GM12878 (cell line): ENCODE measurements at regions of chr1 and their contacts with region 1.

Region 1: GRCh38 chr1:235783148-235783776 is 83.4 kb downstream of the LYST start:
- DNase-seq: no peak
- ATAC-seq: peak; percentile 57
- H3K4me3 ChIP-seq: no peak overlapping the region
- H3K27ac ChIP-seq: no peak overlapping the region
- H3K4me1 ChIP-seq: no peaks in the 10 kb centered on the region
- H3K27me3 ChIP-seq: no peaks in the 10 kb centered on the region
- CTCF ChIP-seq: peak; percentile 29 to 52 (median 32); a peak in 3 of 6 replicates
- EP300 ChIP-seq: no peak
- POLR2A ChIP-seq: no peak
- RAD21 ChIP-seq: peak; percentile 77

Region 2: GRCh38 chr1:235093696-235094592 is 689.3 kb before region 1 on chr1:
- CTCF ChIA-PET with region 1: interaction called, 4 read pairs
- POLR2A ChIA-PET with region 1: no interaction called
- RAD21 ChIA-PET with region 1: no interaction called
- SMC1A ChIA-PET with region 1: no interaction called
- in situ Hi-C with region 1: loop called (anchors 10 kb)
- intact Hi-C with region 1: no loop called
- DNase-seq: no peak
- ATAC-seq: peak; percentile 94
- H3K4me3 ChIP-seq: no peak overlapping the region
- H3K27ac ChIP-seq: no peak overlapping the region
- H3K4me1 ChIP-seq: no peaks in the 10 kb centered on the region; the same call in 1 of the 2 replicates
- H3K27me3 ChIP-seq: no peaks in the 10 kb centered on the region
- CTCF ChIP-seq: peak; percentile 91 to 97 (median 94)
- EP300 ChIP-seq: no peak
- POLR2A ChIP-seq: no peak
- RAD21 ChIP-seq: peak; percentile 81

Region 3: DNA sequence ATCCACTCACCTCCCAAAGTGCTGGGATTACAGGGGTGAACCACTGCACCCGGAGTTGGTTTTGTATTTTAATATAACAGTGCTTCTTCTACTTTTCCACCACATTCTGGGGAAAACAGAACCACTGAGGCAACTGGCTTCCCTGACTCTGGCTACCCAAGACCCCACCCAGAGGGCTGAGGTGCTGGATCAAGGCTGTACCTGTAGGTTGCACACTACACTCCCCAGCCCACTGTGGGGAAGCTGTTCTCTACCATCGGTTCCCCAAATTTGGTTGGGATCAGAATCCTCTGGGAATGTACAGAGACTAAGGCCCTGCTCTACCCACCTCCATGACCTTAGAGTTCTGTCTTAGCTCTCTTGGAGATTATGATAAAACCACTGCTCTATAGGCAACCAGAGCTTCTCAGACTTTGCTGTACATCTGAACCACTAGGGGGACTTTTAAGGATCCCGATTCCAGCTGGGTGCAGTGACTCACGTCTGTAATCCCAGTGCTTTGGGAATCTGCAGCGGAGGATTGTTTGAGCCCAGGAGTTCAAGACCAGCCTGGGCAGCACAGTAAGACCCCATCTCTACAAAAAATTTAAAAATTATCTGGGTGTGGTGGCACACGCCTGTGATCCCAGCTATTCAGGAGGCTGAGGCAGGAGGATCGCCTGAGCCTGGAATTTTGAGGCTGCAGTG is 185.3 kb before region 1 on chr1:
- CTCF ChIA-PET with region 1: interaction called, 26 read pairs
- POLR2A ChIA-PET with region 1: no interaction called
- RAD21 ChIA-PET with region 1: interaction called, 3 read pairs
- SMC1A ChIA-PET with region 1: interaction called, 5 read pairs
- in situ Hi-C with region 1: no loop called
- intact Hi-C with region 1: no loop called
- DNase-seq: no peak
- ATAC-seq: peak; percentile 42; the same call in 2 of the 3 replicates
- H3K4me3 ChIP-seq: no peak overlapping the region
- H3K27ac ChIP-seq: no peak overlapping the region
- H3K4me1 ChIP-seq: no peaks in the 10 kb centered on the region
- H3K27me3 ChIP-seq: no peaks in the 10 kb centered on the region
- CTCF ChIP-seq: peak; percentile 13 to 41 (median 35); a peak in 5 of 6 replicates
- EP300 ChIP-seq: no peak
- POLR2A ChIP-seq: no peak
- RAD21 ChIP-seq: no peak

Region 4: GRCh38 chr1:235758931-235759330 is 24.3 kb before region 1 on chr1:
- CTCF ChIA-PET with region 1: interaction called, 16 read pairs
- POLR2A ChIA-PET with region 1: no interaction called
- RAD21 ChIA-PET with region 1: interaction called, 4 read pairs
- SMC1A ChIA-PET with region 1: interaction called, 6 read pairs
- in situ Hi-C with region 1: no loop called
- intact Hi-C with region 1: no loop called
- DNase-seq: no peak
- ATAC-seq: no peak
- H3K4me3 ChIP-seq: no peak overlapping the region
- H3K27ac ChIP-seq: no peak overlapping the region
- H3K4me1 ChIP-seq: no peaks in the 10 kb centered on the region
- H3K27me3 ChIP-seq: no peaks in the 10 kb centered on the region
- CTCF ChIP-seq: no peak
- EP300 ChIP-seq: no peak
- POLR2A ChIP-seq: no peak
- RAD21 ChIP-seq: no peak

Region 5: DNA sequence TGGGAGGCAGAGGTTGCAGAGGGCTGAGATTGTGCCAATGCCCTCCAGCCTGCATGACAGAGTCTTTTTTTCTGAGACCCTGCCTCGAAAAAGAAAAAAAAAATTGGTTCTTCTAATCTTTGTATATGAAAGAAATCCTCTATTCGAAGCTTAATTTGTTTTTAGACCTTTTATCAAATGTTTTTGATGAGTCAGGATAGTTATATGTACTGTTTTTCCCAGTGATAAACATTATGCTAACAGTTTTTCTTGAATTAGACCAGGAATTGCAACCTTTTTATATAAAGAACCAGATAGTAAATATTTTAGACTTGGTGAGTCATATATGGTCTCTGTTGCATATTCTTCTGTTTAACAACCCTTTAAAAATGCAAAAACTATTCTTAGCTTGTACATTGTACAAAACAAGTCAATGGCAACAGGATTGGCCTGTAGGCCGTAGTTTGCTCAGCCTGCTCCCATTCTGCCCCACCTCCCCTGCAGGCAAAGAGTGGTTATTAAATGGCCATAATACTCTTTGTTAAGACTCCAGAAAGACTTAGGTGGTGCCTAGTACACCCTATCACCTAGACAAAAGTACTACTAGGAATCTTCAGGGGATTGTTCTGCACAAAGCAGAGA is 38.2 kb after region 1 on chr1:
- CTCF ChIA-PET with region 1: interaction called, 3 read pairs
- POLR2A ChIA-PET with region 1: no interaction called
- RAD21 ChIA-PET with region 1: interaction called, 4 read pairs
- SMC1A ChIA-PET with region 1: interaction called, 10 read pairs
- in situ Hi-C with region 1: no loop called
- intact Hi-C with region 1: no loop called
- DNase-seq: no peak
- ATAC-seq: no peak
- H3K4me3 ChIP-seq: no peak overlapping the region
- H3K27ac ChIP-seq: no peak overlapping the region
- H3K4me1 ChIP-seq: no peaks in the 10 kb centered on the region
- H3K27me3 ChIP-seq: no peaks in the 10 kb centered on the region
- CTCF ChIP-seq: no peak
- EP300 ChIP-seq: no peak
- POLR2A ChIP-seq: no peak
- RAD21 ChIP-seq: no peak

Region 6: GRCh38 chr1:235946571-235946981 is 163.3 kb after region 1 on chr1:
- CTCF ChIA-PET with region 1: interaction called, 15 read pairs
- POLR2A ChIA-PET with region 1: no interaction called
- RAD21 ChIA-PET with region 1: interaction called, 9 read pairs
- SMC1A ChIA-PET with region 1: interaction called, 16 read pairs
- in situ Hi-C with region 1: no loop called
- intact Hi-C with region 1: no loop called
- DNase-seq: no peak
- ATAC-seq: peak; percentile 86
- H3K4me3 ChIP-seq: no peak overlapping the region
- H3K27ac ChIP-seq: no peak overlapping the region
- H3K4me1 ChIP-seq: peaks cover 17% of the 10 kb centered on the region
- H3K27me3 ChIP-seq: no peaks in the 10 kb centered on the region
- CTCF ChIP-seq: peak; percentile 42 to 58 (median 55); a peak in 5 of 6 replicates
- EP300 ChIP-seq: no peak
- POLR2A ChIP-seq: no peak
- RAD21 ChIP-seq: peak; percentile 73